Heart left ventricle (tissue), 16 donors: ENCODE measurements at regions of chr5 and their contacts with region 1.

Region 1: DNA sequence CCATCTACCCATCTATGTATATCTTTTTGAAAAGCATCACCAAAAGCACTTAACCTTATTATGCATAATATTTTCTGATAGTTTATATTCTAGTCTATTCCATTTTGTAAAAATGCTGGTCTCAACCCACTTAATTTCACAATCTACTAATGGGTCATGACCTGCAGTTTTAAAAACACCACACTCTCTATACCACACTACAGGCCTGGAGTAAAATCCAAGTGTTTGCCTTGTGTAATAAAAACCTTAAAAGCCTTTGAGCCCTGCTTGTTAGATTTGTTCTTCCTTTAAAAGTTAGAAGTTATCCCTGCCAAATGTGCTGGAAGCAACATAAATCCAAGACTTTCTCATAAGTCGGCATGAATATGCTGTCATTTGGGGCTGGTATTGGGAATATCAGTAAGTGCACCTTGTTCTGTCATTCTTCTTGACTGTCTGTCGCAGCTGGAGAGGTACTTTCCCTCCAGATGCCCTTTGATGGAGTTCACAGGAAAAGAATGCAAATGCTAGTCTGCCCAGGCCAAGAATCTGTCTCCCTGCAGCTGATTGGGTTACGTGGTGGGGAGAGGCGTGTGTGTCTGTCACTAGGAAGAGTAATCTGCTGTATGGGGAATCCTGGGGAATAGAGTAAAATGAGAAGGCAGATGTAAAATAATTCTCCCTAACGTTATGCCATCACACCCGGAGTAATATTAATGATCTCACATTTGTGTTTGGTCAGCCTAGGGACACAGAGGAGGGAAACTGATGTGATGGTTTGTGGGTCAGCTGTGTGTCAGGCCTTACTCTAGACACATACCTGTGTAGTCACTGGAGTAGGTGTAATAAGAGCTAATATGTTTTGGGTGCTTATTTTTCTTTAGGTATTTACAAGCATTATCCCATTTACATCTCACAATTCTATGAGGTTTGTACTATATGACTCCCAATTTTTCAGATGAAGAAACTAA is 79.4 kb downstream of the ZNF366 start:
- DNase-seq: peak in 4 of 5 donors; percentile 39 to 53 (median 50)
- ATAC-seq: peak; percentile 78 to 97 (median 92)
- H3K4me3 ChIP-seq: no peak overlapping the region
- H3K27ac ChIP-seq: peak overlapping the region in 11 of 12 donors; percentile 4 to 73 (median 50)
- H3K4me1 ChIP-seq: peaks cover 0 to 41% (median 16%) of the 10 kb centered on the region in 12 donors
- H3K27me3 ChIP-seq: no peaks in the 10 kb centered on the region
- CTCF ChIP-seq: no peak
- POLR2A ChIP-seq: no peak

Region 2: DNA sequence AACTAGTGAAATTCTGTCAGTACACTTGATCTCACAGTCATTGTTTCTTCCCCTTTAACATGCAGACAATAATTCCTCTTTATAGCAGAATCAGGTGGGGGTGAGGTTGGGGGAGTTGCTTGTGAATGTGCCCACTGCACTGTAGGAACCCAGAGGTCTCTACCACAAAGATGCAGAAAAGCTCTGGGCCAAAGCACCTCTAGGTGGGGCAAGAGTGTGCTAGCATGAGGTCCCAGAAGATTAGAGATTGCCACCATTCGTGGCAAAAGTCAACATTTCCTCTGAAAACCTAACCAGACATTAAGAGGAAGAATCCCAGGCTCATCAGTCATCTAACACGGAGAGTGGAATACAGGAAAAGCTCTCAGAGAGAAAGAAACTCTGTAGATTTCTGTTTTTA is 33.1 kb before region 1 on chr5:
- intact Hi-C with region 1: loop called in 1 of 10 experiments (anchors 5 kb)
- DNase-seq: no peak
- ATAC-seq: peak in 2 of 4 donors; percentile 18 to 21
- H3K4me3 ChIP-seq: no peak overlapping the region
- H3K27ac ChIP-seq: no peak overlapping the region
- H3K4me1 ChIP-seq: peaks cover 0 to 56% (median 18%) of the 10 kb centered on the region in 12 donors
- H3K27me3 ChIP-seq: no peaks in the 10 kb centered on the region
- CTCF ChIP-seq: peak in 10 of 12 donors; percentile 14 to 52 (median 31)
- POLR2A ChIP-seq: no peak